CD8-positive, alpha-beta T cell (primary cell): ENCODE measurements at regions of chr1 and their contacts with region 1.

Region 1: GRCh38 chr1:115052454-115053083 is 22.9 kb downstream of the TSHB start:
- DNase-seq: peak; percentile 22 to 75 (median 62)
- ATAC-seq: peak; percentile 98
- H3K4me3 ChIP-seq: no peak overlapping the region
- H3K4me3 Mint-ChIP-seq: no peak overlapping the region
- H3K27ac ChIP-seq: no peak overlapping the region
- H3K27ac Mint-ChIP-seq: no peak overlapping the region
- H3K4me1 ChIP-seq: no peaks in the 10 kb centered on the region
- H3K4me1 Mint-ChIP-seq: no peaks in the 10 kb centered on the region
- H3K27me3 ChIP-seq: no peaks in the 10 kb centered on the region
- H3K27me3 Mint-ChIP-seq: no peaks in the 10 kb centered on the region
- CTCF ChIP-seq: peak; percentile 99

Region 2: GRCh38 chr1:114979278-114979891 is 73.2 kb before region 1 on chr1:
- CTCF ChIA-PET with region 1: interaction called, 6 read pairs
- POLR2A ChIA-PET with region 1: no interaction called
- intact Hi-C with region 1: loop called (anchors 1 to 2 kb)
- DNase-seq: peak; percentile 42 to 79 (median 76)
- ATAC-seq: no peak
- H3K4me3 ChIP-seq: no peak overlapping the region
- H3K4me3 Mint-ChIP-seq: no peak overlapping the region
- H3K27ac ChIP-seq: no peak overlapping the region
- H3K27ac Mint-ChIP-seq: no peak overlapping the region
- H3K4me1 ChIP-seq: no peaks in the 10 kb centered on the region
- H3K4me1 Mint-ChIP-seq: no peaks in the 10 kb centered on the region
- H3K27me3 ChIP-seq: peaks cover 0 to 2% of the 10 kb centered on the region in 2 experiments
- H3K27me3 Mint-ChIP-seq: peaks cover 20% of the 10 kb centered on the region
- CTCF ChIP-seq: peak; percentile 97

Region 3: DNA sequence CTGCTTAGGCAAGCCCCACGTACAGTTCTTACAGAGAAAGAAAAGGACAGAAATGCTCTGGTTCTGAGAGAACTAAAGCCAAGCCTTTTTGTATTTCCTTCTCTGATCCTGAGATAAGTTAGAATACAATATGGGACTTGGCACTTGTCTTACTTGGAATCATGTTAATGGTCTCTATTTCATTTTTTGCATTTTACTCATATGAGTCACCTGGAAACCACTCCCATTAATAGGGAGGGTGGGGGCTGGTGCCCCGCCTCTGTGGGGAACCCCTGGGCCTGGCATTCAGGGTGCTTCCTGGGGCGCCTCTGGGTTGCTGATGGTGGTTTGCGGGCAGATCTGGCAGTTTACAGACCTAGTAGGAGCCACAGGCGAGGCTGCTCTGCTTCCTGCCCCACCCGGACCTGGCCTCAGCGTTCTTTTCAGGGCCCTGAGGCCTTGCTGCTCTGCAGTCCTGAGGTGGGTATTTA is 10.0 kb after region 1 on chr1:
- CTCF ChIA-PET with region 1: interaction called, 10 read pairs
- POLR2A ChIA-PET with region 1: interaction called, 3 read pairs
- intact Hi-C with region 1: loop called in 1 of 2 experiments (anchors 1 kb)
- DNase-seq: peak; percentile 91 to 99 (median 94)
- ATAC-seq: peak; percentile 89
- H3K4me3 ChIP-seq: peak overlapping the region in 1 of 2 experiments; percentile 17
- H3K4me3 Mint-ChIP-seq: peak overlapping the region; percentile 79
- H3K27ac ChIP-seq: peak overlapping the region; percentile 74 to 93
- H3K27ac Mint-ChIP-seq: peak overlapping the region; percentile 100
- H3K4me1 ChIP-seq: peaks cover 35% of the 10 kb centered on the region
- H3K4me1 Mint-ChIP-seq: peaks cover 43% of the 10 kb centered on the region
- H3K27me3 ChIP-seq: no peaks in the 10 kb centered on the region
- H3K27me3 Mint-ChIP-seq: no peaks in the 10 kb centered on the region
- CTCF ChIP-seq: no peak

Region 4: DNA sequence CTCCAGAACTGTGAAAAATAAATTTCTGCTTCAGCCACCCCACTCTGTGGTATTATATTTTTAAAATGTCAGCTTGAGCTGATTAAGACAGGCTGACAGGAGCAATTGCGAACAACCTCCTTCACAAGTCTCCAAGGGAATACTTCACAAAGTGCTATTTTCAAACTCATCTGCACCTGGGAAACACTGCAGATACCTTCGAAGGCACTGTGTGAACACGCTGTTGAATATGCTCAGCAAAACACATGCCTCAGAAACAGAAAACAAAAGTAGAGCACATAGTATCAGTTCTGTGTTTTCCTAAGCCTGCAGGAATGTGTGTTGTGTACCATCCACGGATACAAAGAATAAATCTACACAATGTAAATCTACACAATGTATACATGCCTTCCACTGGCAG is 26.1 kb after region 1 on chr1:
- CTCF ChIA-PET with region 1: interaction called, 17 read pairs
- POLR2A ChIA-PET with region 1: no interaction called
- intact Hi-C with region 1: no loop called
- DNase-seq: no peak
- ATAC-seq: no peak
- H3K4me3 ChIP-seq: no peak overlapping the region
- H3K4me3 Mint-ChIP-seq: no peak overlapping the region
- H3K27ac ChIP-seq: no peak overlapping the region
- H3K27ac Mint-ChIP-seq: no peak overlapping the region
- H3K4me1 ChIP-seq: no peaks in the 10 kb centered on the region
- H3K4me1 Mint-ChIP-seq: no peaks in the 10 kb centered on the region
- H3K27me3 ChIP-seq: no peaks in the 10 kb centered on the region
- H3K27me3 Mint-ChIP-seq: peaks cover 2% of the 10 kb centered on the region
- CTCF ChIP-seq: no peak

Region 5: GRCh38 chr1:115098979-115099692 is 46.6 kb after region 1 on chr1:
- CTCF ChIA-PET with region 1: interaction called, 19 read pairs
- POLR2A ChIA-PET with region 1: no interaction called
- intact Hi-C with region 1: no loop called
- DNase-seq: peak; percentile 55 to 96 (median 74)
- ATAC-seq: peak; percentile 89
- H3K4me3 ChIP-seq: peak overlapping the region; percentile 51 to 56
- H3K4me3 Mint-ChIP-seq: peak overlapping the region; percentile 86
- H3K27ac ChIP-seq: peak overlapping the region; percentile 95
- H3K27ac Mint-ChIP-seq: peak overlapping the region; percentile 97
- H3K4me1 ChIP-seq: peaks cover 27% of the 10 kb centered on the region
- H3K4me1 Mint-ChIP-seq: peaks cover 36% of the 10 kb centered on the region
- H3K27me3 ChIP-seq: no peaks in the 10 kb centered on the region
- H3K27me3 Mint-ChIP-seq: no peaks in the 10 kb centered on the region
- CTCF ChIP-seq: no peak

Region 6: GRCh38 chr1:115179397-115179835 is 126.8 kb after region 1 on chr1:
- CTCF ChIA-PET with region 1: no interaction called
- POLR2A ChIA-PET with region 1: no interaction called
- intact Hi-C with region 1: no loop called
- DNase-seq: no peak
- ATAC-seq: no peak
- H3K4me3 ChIP-seq: no peak overlapping the region
- H3K4me3 Mint-ChIP-seq: no peak overlapping the region
- H3K27ac ChIP-seq: no peak overlapping the region
- H3K27ac Mint-ChIP-seq: no peak overlapping the region
- H3K4me1 ChIP-seq: no peaks in the 10 kb centered on the region
- H3K4me1 Mint-ChIP-seq: no peaks in the 10 kb centered on the region
- H3K27me3 ChIP-seq: no peaks in the 10 kb centered on the region
- H3K27me3 Mint-ChIP-seq: peaks cover 2% of the 10 kb centered on the region
- CTCF ChIP-seq: no peak

Region 7: DNA sequence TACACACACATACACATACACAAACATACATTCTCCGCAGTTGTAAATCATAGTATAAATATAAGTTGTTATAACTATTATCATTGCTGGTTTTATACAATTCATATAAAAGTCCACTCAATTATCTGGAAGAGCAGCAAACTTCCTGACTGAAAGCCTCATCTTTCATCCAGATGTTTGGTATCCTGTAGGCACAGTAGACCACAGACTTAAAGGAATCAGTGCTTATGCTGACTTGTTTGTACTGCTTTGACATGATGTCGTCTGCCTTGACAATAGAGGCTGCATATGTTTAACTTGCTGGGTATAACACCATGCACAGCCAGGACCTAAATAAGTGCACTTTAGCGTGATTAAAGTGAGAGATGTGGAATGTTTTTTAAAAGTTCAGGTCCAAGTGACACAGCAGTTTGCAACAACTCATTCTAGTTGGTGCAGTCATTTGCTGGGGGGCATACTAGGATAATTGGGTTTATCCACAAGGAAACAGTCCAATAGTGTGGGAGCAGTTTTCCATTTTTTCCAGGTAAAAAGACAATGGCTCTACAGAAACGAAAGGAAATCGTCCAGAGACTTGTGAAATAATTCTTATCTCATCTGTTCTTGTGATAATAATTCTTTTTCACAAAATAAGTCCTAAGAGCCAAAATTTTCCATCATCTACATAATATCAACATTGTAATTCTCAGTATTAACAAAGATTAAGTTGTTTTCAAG is 147.0 kb after region 1 on chr1:
- CTCF ChIA-PET with region 1: no interaction called
- POLR2A ChIA-PET with region 1: no interaction called
- intact Hi-C with region 1: no loop called
- DNase-seq: no peak
- ATAC-seq: no peak
- H3K4me3 ChIP-seq: no peak overlapping the region
- H3K4me3 Mint-ChIP-seq: no peak overlapping the region
- H3K27ac ChIP-seq: no peak overlapping the region
- H3K27ac Mint-ChIP-seq: no peak overlapping the region
- H3K4me1 ChIP-seq: no peaks in the 10 kb centered on the region
- H3K4me1 Mint-ChIP-seq: no peaks in the 10 kb centered on the region
- H3K27me3 ChIP-seq: peaks cover 0 to 3% of the 10 kb centered on the region in 2 experiments
- H3K27me3 Mint-ChIP-seq: peaks cover 18% of the 10 kb centered on the region
- CTCF ChIP-seq: no peak